Heart right ventricle (tissue), 16 donors: ENCODE measurements at regions of chr16 and their contacts with region 1.

Region 1: DNA sequence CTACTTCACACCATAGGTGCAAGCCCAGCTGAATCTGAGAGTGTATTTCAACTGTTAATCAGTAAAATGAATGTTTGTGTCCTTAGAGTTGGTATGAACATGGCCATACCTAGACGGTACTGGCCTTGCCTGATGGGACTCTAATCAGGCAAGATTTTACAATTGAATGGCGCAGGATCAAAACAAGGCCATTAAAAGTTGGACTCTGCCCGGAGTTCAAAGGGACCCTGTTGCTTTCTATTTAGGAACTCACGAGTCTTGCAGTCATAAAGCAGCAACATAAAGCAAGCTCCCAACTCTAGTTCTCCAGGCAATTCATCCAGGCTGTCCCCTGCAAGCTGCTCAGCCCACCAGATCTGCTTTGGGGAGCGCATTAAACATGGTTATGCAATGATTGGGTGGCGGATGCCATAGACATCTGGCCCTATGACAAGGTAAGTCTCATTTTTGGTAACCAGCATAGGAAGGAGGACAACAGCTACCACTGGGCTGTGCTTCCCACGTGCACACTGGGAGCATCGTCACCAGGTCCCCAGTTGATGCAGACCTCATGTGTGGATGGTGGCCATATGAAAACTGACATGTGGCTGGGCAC is 8.8 kb downstream of the TMEM186 start:
- DNase-seq: no peak
- ATAC-seq: no peak
- H3K4me3 ChIP-seq: no peak overlapping the region
- H3K27ac ChIP-seq: no peak overlapping the region
- H3K4me1 ChIP-seq: no peaks in the 10 kb centered on the region
- H3K27me3 ChIP-seq: no peaks in the 10 kb centered on the region
- CTCF ChIP-seq: no peak

Region 2: GRCh38 chr16:8537691-8538342 is 250.9 kb before region 1 on chr16:
- intact Hi-C with region 1: no loop called
- DNase-seq: no peak
- ATAC-seq: no peak
- H3K4me3 ChIP-seq: no peak overlapping the region
- H3K27ac ChIP-seq: no peak overlapping the region
- H3K4me1 ChIP-seq: no peaks in the 10 kb centered on the region
- H3K27me3 ChIP-seq: peaks cover 0 to 26% (median 0%) of the 10 kb centered on the region in 7 donors
- CTCF ChIP-seq: no peak

Region 3: DNA sequence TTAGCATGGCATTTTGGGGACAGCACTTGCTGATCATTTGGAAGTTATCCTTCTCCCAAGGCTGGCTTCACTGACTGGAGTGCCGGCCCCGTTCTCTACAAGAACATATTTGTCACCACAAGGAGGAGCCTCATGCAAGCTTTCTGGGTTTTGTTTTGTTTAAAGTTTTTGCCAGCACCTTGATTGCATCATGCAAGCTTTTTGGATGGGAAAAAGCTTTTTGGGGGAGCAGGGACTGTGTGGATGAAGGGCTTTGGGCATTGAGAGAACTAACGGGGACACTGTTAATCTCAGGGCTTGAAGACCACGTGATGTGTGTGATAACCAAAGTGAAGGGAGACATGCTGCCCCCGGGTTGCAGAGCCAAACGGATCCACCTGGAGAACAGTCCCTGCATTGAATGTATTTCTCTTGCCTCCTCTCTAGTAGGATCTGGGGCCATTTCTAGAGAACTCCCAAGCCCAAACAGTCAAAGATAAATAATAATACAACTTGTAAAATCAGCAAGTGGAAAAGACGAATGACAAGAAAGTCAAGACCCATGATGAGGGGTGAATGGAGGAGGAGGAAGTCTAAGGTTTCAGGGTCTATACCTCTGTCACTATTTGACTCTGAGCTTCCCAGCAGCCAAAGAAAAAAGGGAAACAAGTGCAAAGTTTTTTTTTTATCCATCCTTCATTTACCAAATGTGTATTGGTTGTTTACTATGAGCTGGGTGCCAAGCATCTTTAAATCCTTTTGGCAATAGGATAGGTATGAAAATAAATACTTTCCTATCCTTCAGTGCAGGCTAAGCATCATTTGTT is 215.6 kb before region 1 on chr16:
- intact Hi-C with region 1: loop called in 4 of 10 experiments (anchors 10 kb)
- DNase-seq: no peak
- ATAC-seq: peak in 1 of 8 donors; percentile 32
- H3K4me3 ChIP-seq: no peak overlapping the region
- H3K27ac ChIP-seq: no peak overlapping the region
- H3K4me1 ChIP-seq: peaks cover 0 to 14% (median 0%) of the 10 kb centered on the region in 9 donors
- H3K27me3 ChIP-seq: peaks cover 0 to 52% (median 34%) of the 10 kb centered on the region in 7 donors
- CTCF ChIP-seq: peak in 7 of 9 donors; percentile 27 to 55 (median 46)

Region 4: GRCh38 chr16:8708536-8708935 is 80.1 kb before region 1 on chr16:
- intact Hi-C with region 1: loop called in 1 of 10 experiments (anchors 2 kb)
- DNase-seq: no peak
- ATAC-seq: no peak
- H3K4me3 ChIP-seq: no peak overlapping the region
- H3K27ac ChIP-seq: no peak overlapping the region
- H3K4me1 ChIP-seq: no peaks in the 10 kb centered on the region
- H3K27me3 ChIP-seq: no peaks in the 10 kb centered on the region
- CTCF ChIP-seq: no peak

Region 5: DNA sequence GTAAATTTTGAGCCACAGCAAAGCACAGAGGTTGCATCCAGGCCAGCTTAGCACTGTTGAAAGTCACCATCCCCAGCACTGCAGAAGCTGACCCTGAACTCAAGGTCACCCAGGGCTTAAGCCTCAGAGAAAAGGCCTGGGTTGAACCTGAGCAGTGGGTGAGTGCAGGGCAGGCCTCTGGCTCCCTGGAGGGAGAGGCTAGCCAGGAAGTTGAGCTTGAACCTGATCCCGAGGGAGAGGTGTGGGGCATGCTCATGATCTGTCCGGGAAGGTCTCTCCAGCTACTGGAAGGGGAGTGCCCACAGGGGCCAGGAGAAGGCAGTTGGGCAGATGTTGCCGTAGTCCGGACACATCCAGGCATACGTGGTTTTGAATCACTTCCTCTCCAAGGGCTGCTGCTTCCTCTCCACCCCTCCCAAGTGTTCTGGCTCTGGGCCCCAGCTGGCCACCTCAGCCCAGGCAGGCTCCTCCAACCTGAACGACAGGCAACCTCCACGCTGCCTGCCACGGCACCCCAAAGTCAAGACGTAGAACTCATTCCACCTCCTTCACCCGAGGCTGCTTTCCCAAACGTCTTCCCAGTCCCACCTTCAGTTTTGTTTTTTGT is 61.7 kb after region 1 on chr16:
- intact Hi-C with region 1: no loop called
- DNase-seq: peak; percentile 57 to 64
- ATAC-seq: peak; percentile 71 to 88 (median 78)
- H3K4me3 ChIP-seq: no peak overlapping the region
- H3K27ac ChIP-seq: peak overlapping the region in 9 of 10 donors; percentile 45 to 79 (median 64)
- H3K4me1 ChIP-seq: peaks cover 4 to 56% (median 34%) of the 10 kb centered on the region in 9 donors
- H3K27me3 ChIP-seq: no peaks in the 10 kb centered on the region
- CTCF ChIP-seq: no peak